Activated T-helper 1 cell treated with anti-CD3 and anti-CD28 coated beads, Interleukin-12 subunit alpha, Interleukin-12 subunit beta, Interleukin-2, Interleukin-4 antibody, amounts not matched to agents 30 ng/mL and 10 ng/mL and 1 ng/mL, durations not matched to agents 14 hours and 24 hours and 36 hours (primary cell): ENCODE measurements at regions of chr14 and their contacts with region 1.

Region 1: DNA sequence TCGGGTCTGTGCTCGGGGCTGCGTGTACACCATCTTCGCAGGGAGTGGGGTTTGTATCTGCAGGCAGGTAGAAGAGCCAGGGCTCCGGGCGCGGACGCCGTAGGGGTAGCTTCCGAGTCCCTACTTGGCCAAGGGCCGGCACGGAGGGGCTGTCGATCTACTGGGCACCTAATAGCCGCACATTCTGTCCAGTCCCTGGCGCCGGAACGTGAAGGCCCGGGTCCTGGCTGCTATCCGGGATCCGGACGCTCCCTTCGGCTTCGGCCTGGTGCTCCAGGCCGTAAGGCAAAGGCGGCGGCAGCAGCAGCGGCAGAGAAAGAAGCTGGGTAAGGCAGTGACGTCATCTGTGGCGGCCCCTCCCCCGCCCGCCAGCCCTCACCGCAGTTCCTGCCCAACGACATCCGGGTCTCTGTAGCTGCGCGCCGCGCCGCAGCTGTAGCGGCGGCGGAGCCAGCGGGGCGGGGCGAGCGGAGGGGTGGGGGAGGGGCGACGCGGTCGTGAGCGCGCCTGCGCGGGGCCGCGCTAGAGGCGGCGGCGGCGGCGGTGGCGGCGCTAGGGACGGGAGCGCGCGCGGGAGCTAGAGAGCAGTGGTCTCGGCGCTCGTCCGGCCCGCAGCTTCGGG is at the start of gene PPM1A:
- DNase-seq: peak; percentile 90
- H3K4me3 Mint-ChIP-seq: peak within 1 kb of the TSS; percentile 96
- H3K27ac Mint-ChIP-seq: peak within 1 kb of the TSS; percentile 100
- H3K4me1 Mint-ChIP-seq: peaks cover 59% of the 10 kb centered on the region
- H3K27me3 Mint-ChIP-seq: no peaks in the 10 kb centered on the region
- total RNA-seq, gene PPM1A: 43.9 and 50.7 TPM in 2 replicates

Region 2: DNA sequence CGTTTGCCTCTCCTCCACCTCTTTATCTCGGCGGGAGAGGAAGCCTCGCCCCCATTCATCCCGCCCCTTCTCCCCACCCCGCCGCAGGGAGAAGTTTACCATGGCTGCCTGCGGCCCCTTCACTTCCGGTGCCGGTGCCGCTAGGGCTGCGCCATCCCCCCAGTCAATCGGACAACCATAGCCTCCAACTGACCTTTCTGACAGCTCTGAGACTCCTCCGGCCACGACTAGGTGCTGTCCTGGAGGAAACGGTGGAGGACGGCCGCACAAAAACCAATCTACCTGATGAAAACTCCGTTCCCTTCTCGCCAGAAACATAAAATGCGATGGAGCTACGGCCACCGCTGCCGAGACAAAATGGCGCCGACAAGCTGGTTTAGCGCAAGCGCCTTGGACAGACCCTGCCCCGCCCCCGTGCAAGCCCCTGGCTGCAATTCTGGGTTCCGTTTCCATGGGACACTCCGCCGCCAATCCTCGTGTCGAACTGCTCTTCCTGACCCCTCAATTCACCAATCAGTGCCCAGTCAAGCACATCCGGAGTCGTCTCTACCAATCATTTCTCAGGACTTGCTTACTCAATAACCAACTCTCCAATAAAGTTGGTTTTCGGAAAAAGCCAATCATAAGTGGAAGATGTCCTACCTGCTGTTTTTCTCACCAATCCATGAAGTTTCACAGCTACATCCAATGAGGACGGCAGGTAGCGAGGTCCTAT is 1950.9 kb before region 1 on chr14:
- intact Hi-C with region 1: loop called (anchors 2 kb)
- DNase-seq: peak; percentile 97
- H3K4me3 Mint-ChIP-seq: no peak overlapping the region
- H3K27ac Mint-ChIP-seq: no peak overlapping the region
- H3K4me1 Mint-ChIP-seq: peaks cover 53% of the 10 kb centered on the region
- H3K27me3 Mint-ChIP-seq: no peaks in the 10 kb centered on the region

Region 3: DNA sequence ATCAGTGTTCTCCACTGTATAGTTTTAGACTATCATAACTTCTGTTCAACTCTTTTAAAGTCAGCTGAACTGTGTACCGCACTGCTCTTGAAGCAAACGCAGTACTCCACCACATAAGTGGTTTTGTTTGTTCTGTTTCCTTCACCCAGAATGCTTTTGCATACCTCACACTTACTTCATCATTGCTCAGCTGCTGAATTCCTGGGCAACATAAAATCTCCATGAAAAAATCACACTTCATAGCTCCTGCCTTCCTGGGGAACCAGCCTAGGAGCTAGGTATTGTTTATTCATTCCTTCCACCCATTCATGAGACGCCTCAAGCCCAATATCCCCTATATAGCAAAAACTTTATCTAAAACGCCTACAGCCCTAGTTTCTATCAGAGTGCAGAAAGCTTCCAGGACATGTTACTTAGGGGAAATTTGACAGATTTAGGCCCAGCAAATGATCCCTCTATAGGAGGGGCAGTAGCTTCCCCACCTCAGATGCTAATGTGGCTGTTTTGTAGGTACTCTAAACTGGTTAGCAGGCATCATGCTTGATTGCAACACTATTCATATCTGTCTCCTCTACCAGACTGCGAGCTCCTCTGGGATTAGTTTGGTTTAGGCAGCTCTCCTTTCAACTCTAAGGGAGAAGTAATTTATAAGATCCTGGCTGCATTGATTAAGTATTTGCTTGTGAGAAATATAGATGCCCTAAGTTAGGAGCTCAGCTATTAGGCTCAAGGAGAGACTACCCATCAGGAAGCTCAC is 284.4 kb before region 1 on chr14:
- intact Hi-C with region 1: loop called (anchors 1 kb)
- DNase-seq: no peak
- H3K4me3 Mint-ChIP-seq: peak overlapping the region; percentile 80
- H3K27ac Mint-ChIP-seq: no peak overlapping the region
- H3K4me1 Mint-ChIP-seq: no peaks in the 10 kb centered on the region
- H3K27me3 Mint-ChIP-seq: peaks cover 7% of the 10 kb centered on the region

Region 4: GRCh38 chr14:60184146-60184904 is 64.5 kb before region 1 on chr14:
- intact Hi-C with region 1: loop called (anchors 1 kb)
- DNase-seq: no peak
- H3K4me3 Mint-ChIP-seq: peak overlapping the region; percentile 65
- H3K27ac Mint-ChIP-seq: peak overlapping the region; percentile 67
- H3K4me1 Mint-ChIP-seq: peaks cover 13% of the 10 kb centered on the region
- H3K27me3 Mint-ChIP-seq: no peaks in the 10 kb centered on the region

Region 5: DNA sequence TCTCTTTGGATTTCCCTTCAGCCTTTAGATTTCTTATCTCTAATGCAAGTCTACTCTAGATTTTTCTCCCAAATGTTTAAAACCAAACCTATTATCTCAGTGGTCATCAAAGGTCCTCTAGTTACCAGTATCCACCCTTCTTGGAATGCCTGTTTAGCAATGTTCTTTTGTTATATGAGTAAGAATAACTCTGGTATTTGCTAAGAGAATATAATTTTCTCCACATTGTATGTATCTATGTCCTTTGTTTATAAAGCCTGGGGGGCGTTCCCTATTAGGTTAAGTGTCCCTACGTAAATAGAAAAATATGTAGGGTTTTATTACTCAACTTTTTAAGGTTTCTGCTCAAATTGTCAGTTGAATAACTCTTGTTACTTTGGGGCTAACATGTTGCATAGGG is 27.5 kb after region 1 on chr14:
- intact Hi-C with region 1: no loop called
- DNase-seq: no peak
- H3K4me3 Mint-ChIP-seq: no peak overlapping the region
- H3K27ac Mint-ChIP-seq: no peak overlapping the region
- H3K4me1 Mint-ChIP-seq: peaks cover 17% of the 10 kb centered on the region
- H3K27me3 Mint-ChIP-seq: no peaks in the 10 kb centered on the region

Region 6: DNA sequence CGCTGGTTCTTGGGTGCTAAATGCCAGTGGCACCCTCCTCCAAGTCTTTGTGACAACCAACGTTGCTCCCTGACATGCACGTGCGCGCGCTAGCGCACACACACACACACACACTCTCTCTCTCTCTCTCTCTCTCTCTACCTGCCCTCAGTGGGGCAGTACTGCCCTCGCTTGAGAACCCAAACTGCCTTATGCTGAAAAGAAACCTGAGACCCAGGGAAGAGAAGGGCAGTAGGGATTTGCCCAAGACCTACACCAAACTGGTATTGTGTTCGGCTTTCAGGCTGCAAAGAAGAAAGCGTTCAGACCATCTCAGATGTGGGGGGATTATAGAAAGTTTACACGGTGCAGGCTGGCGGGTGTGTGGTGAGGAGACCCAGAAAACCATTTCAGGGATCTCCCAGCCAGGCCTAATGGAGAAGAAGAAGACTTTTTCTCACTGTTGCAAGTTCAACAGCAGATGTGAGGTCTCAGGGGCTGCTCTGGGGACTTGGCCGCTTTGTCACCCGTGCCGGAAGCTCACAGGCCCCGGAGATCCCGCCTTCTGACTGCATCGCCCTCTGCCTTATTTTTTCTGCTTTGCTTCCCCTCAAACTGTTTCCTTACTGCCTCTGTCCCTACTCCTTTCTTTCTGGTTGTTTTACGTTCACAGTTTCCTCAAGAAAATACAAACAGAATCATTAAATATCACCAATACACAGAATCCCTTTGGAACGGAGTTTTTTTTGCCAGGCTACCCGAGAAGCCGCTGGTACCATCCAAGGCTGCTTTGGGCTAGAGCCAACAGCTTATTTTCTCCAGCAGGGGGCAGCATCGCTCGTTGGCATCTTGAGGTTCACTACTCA is 82.6 kb after region 1 on chr14:
- intact Hi-C with region 1: loop called (anchors 1 kb)
- DNase-seq: peak; percentile 60
- H3K4me3 Mint-ChIP-seq: peak overlapping the region; percentile 92
- H3K27ac Mint-ChIP-seq: peak overlapping the region; percentile 94
- H3K4me1 Mint-ChIP-seq: peaks cover 45% of the 10 kb centered on the region
- H3K27me3 Mint-ChIP-seq: peaks cover 37% of the 10 kb centered on the region

Region 7: DNA sequence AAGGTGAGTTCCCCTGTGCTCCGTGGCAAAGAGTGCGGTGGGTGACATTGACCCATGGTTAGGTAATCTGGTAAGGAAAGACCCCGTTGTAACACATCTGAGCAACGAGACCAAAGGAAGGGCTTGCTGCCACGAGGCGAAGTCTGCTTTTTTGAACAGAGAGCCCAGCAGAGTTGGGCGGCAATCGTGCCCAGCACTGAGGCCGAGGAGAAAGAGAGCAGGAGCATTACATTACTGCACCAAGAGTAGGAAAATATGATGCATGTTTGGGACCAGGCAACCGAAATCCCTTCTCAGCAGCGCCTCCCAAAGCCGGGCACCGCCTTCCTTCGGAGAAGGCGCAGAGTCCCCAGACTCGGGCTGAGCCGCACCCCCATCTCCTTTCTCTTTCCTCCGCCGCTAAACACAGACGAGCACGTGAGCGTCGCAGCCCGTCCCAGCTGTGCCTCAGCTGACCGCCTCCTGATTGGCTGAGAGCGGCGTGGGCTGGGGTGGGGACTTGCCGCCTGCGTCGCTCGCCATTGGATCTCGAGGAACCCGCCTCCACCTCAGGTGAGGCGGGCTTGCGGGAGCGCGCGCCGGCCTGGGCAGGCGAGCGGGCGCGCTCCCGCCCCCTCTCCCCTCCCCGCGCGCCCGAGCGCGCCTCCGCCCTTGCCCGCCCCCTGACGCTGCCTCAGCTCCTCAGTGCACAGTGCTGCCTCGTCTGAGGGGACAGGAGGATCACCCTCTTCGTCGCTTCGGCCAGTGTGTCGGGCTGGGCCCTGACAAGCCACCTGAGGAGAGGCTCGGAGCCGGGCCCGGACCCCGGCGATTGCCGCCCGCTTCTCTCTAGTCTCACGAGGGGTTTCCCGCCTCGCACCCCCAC is 1446.3 kb after region 1 on chr14 and contains the start of gene HIF1A:
- intact Hi-C with region 1: loop called (anchors 10 kb)
- DNase-seq: peak; percentile 95
- H3K4me3 Mint-ChIP-seq: peak within 1 kb of the TSS; percentile 94
- H3K27ac Mint-ChIP-seq: peak within 1 kb of the TSS; percentile 97
- H3K4me1 Mint-ChIP-seq: peaks cover 63% of the 10 kb centered on the region
- H3K27me3 Mint-ChIP-seq: no peaks in the 10 kb centered on the region
- total RNA-seq, gene HIF1A: 241 and 247 TPM in 2 replicates